MCF 10A (cell line): ENCODE measurements at regions of chr7 and their contacts with region 1.

Region 1: GRCh38 chr7:151795168-151795811 is 81.6 kb downstream of the PRKAG2 start:
- DNase-seq: peak; percentile 29
- H3K4me3 Mint-ChIP-seq: no peak overlapping the region
- H3K27ac Mint-ChIP-seq: peak overlapping the region; percentile 51
- H3K4me1 Mint-ChIP-seq: peaks cover 25% of the 10 kb centered on the region
- H3K27me3 Mint-ChIP-seq: no peaks in the 10 kb centered on the region
- CTCF ChIP-seq: no peak

Region 2: DNA sequence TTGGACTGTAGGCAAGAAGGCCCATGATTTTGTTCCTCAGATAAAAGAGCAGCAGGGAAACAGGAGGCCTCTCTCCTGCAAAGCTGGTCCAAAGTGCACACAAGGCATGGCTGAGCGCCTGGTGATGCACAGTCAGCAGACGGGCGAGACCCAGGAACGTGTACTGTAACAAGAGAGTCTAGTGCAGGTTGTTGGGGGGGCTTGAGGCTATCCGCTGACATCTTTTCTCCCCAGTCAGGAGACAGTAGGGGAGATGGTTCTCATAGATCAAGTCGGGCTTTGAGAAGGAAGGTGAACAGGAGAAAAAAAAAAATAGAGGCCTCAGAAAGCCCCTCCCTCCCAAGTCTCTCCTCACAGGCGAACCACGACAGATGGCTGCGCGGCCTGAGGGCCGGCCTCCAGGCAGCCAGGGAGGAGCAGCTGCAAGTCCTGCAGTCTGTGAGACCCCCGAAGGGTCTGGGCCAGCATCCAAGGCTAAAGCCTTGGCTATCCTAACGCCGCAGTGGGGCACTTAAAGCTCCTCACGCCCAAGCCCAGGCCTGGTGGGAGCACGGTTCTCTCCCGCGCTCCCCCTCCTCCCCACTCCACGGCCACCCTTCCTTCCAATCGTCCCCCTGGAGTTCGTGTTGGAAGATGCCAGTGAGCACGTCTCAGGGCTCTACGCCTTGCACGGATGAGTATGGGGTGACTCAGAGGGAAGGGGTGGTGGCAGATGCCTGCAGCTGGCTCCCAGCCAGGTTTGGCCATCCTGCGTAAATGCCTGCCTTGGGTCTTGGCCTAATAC is 13.3 kb after region 1 on chr7:
- CTCF ChIA-PET with region 1: interaction called, 3 read pairs
- POLR2A ChIA-PET with region 1: interaction called, 8 read pairs
- intact Hi-C with region 1: loop called (anchors 1 kb)
- DNase-seq: peak; percentile 95
- H3K4me3 Mint-ChIP-seq: no peak overlapping the region
- H3K27ac Mint-ChIP-seq: no peak overlapping the region
- H3K4me1 Mint-ChIP-seq: peaks cover 21% of the 10 kb centered on the region
- H3K27me3 Mint-ChIP-seq: no peaks in the 10 kb centered on the region
- CTCF ChIP-seq: no peak

Region 3: GRCh38 chr7:151851145-151851751 is 56.0 kb after region 1 on chr7:
- CTCF ChIA-PET with region 1: no interaction called
- POLR2A ChIA-PET with region 1: no interaction called
- intact Hi-C with region 1: no loop called
- DNase-seq: no peak
- H3K4me3 Mint-ChIP-seq: no peak overlapping the region
- H3K27ac Mint-ChIP-seq: peak overlapping the region; percentile 72
- H3K4me1 Mint-ChIP-seq: peaks cover 6% of the 10 kb centered on the region
- H3K27me3 Mint-ChIP-seq: peaks cover 6% of the 10 kb centered on the region
- CTCF ChIP-seq: no peak

Region 4: DNA sequence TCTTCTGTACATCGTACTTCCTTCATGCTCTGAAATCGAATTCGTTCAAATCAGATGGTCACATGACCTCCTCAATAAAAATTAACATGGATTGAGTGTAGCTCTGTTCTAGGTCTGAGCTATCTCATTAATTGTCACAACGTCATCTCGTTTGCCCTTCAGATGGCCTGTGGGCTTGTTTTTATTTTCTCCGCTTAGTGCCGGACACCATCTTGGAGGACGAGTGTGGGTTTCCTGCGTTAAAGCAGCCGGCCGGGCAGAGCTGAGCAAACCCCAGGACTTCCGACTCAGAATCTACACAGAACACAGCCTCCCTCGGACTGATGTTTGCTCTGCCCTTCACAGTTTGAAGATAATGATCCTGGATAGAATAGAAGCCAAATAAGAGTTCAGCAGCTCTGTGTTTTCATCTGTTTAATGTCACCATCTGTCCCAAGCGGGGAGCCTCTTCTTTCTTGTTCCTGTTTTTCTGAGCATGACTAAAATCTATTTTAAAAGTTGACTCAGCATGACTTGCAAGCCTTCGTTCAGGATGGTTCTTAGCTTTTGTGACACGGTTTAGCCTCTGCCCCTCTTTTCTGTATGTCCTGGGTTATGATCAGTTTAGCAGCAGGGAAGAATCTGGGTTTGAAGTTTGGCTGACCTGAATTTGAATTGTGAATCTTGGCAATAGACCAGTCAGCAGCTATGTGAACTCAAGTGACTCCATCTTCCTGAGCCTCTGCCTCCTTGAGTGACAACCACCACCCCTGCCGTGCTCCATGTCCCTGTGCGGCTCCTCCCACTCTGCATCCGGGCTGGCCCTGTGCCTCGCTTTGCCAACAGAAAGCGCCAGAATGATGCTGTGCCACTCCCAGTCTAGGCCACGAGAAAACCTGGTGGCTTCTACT is 130.4 kb after region 1 on chr7:
- CTCF ChIA-PET with region 1: no interaction called
- POLR2A ChIA-PET with region 1: interaction called, 10 read pairs
- intact Hi-C with region 1: loop called (anchors 5 kb)
- DNase-seq: no peak
- H3K4me3 Mint-ChIP-seq: no peak overlapping the region
- H3K27ac Mint-ChIP-seq: no peak overlapping the region
- H3K4me1 Mint-ChIP-seq: peaks cover 26% of the 10 kb centered on the region
- H3K27me3 Mint-ChIP-seq: no peaks in the 10 kb centered on the region
- CTCF ChIP-seq: no peak

Region 5: DNA sequence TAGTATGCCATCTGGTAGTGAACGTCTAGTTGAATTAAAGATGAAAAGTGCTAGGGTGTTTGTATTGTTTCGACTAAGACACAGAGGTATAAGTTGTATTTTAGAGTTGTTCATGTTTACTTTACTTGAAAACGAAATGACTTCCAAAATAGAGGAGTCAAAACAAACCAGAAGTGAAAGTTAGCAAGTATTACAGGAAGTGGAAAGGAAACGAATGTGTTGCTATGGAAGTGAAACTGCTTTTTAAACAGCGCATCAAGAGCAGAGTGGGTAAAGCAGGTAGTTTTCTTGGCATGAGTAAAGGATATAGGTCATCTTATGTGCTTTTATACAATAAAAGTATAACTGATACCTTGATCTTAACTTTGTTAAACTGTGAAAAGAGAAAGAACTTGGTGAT is 140.9 kb after region 1 on chr7:
- CTCF ChIA-PET with region 1: interaction called, 6 read pairs
- POLR2A ChIA-PET with region 1: interaction called, 9 read pairs
- intact Hi-C with region 1: loop called (anchors 5 kb)
- DNase-seq: no peak
- H3K4me3 Mint-ChIP-seq: no peak overlapping the region
- H3K27ac Mint-ChIP-seq: no peak overlapping the region
- H3K4me1 Mint-ChIP-seq: peaks cover 23% of the 10 kb centered on the region
- H3K27me3 Mint-ChIP-seq: peaks cover 35% of the 10 kb centered on the region
- CTCF ChIP-seq: no peak